MCF 10A (cell line): ENCODE measurements at regions of chr17 and their contacts with region 1.

Region 1: GRCh38 chr17:79393358-79394202 is 217.3 kb downstream of the RBFOX3 start:
- DNase-seq: peak; percentile 63
- H3K4me3 Mint-ChIP-seq: no peak overlapping the region
- H3K27ac Mint-ChIP-seq: no peak overlapping the region
- H3K4me1 Mint-ChIP-seq: no peaks in the 10 kb centered on the region
- H3K27me3 Mint-ChIP-seq: peaks cover 91% of the 10 kb centered on the region
- CTCF ChIP-seq: peak; percentile 91

Region 2: DNA sequence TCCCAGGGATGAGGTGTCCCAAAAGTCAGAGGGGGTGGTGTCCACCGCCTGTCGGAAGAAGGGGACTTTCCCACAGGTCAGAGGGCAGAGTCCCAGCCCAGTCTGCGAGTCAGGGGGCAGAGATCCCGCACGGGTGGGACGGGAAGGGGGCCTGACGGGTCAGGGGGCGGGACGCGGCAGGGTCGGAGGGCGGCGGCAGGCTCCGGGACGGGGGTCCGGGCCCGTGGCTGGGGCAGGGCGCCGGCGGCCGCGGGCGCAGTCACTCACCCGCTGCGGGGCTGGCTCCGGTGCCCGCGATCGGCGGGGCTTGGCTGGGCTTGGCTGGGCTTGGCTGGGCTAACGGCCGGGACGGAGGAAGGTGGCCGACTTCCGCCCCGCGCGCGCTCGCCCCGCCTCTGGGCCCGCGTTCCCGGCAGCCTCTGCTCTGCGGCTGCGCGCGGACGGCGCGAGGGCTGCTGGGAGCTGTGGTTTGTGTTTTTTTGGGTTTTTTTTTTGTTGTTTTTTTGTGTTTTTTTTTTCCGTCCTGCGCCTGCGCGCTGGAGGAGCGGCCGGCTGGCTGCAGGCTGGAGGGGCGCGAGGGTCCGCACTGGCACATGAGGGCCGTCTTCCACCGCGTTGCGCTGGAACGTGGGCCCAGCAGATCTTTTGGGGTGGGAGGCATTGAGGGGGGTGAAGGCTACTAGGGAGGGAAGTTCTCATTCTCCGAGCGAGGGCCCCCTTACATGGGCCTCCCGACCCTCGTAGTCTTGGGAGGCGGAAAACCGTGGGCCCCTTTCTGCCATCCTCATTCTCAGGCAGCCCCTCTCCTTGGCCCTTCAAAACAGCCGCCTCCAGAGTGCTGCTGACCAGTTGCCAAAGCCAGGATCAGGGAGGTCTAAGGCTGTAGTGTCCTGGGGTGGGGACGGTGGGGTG is 383.9 kb before region 1 on chr17 and contains the start of gene CANT1:
- CTCF ChIA-PET with region 1: no interaction called
- POLR2A ChIA-PET with region 1: no interaction called
- intact Hi-C with region 1: loop called (anchors 10 kb)
- DNase-seq: peak; percentile 76
- H3K4me3 Mint-ChIP-seq: peak within 1 kb of the TSS; percentile 90
- H3K27ac Mint-ChIP-seq: peak within 1 kb of the TSS; percentile 98
- H3K4me1 Mint-ChIP-seq: peaks cover 26% of the 10 kb centered on the region
- H3K27me3 Mint-ChIP-seq: no peaks in the 10 kb centered on the region
- CTCF ChIP-seq: no peak
- total RNA-seq, gene CANT1: 62.5 and 65.1 TPM in 2 replicates

Region 3: DNA sequence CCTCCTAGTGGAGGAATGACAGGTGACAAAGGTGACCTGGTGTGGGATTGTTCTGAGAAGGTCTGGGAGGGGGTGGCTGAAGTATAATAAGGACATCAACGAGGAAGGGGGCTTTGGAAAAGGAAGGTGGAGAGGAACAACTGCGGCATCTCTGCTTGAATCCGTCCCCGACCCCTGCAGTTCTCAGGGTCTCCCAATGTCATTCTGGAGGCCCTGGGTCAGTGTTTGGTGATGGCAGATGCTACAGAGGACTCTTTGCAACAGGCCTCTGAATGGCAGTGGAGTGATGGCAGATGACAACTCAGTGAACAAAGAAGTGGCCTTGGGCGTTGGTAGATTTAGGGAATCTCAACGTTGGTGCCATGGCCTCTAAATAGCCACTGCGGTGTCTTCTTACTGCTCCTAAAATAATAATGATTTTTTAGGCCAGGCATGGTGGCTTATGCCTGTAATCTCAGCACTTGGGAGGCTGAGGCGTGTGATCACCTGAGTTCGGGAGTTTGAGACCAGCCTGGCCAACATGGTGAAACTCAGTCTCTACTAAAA is 317.6 kb before region 1 on chr17:
- CTCF ChIA-PET with region 1: interaction called, 273 read pairs
- POLR2A ChIA-PET with region 1: no interaction called
- intact Hi-C with region 1: no loop called
- DNase-seq: no peak
- H3K4me3 Mint-ChIP-seq: peak overlapping the region; percentile 92
- H3K27ac Mint-ChIP-seq: no peak overlapping the region
- H3K4me1 Mint-ChIP-seq: peaks cover 11% of the 10 kb centered on the region
- H3K27me3 Mint-ChIP-seq: no peaks in the 10 kb centered on the region
- CTCF ChIP-seq: no peak

Region 4: GRCh38 chr17:79188048-79188447 is 205.5 kb before region 1 on chr17:
- CTCF ChIA-PET with region 1: interaction called, 212 read pairs
- POLR2A ChIA-PET with region 1: interaction called, 8 read pairs
- intact Hi-C with region 1: loop called (anchors 1 kb)
- DNase-seq: peak; percentile 20
- H3K4me3 Mint-ChIP-seq: no peak overlapping the region
- H3K27ac Mint-ChIP-seq: no peak overlapping the region
- H3K4me1 Mint-ChIP-seq: no peaks in the 10 kb centered on the region
- H3K27me3 Mint-ChIP-seq: peaks cover 91% of the 10 kb centered on the region
- CTCF ChIP-seq: peak; percentile 82

Region 5: DNA sequence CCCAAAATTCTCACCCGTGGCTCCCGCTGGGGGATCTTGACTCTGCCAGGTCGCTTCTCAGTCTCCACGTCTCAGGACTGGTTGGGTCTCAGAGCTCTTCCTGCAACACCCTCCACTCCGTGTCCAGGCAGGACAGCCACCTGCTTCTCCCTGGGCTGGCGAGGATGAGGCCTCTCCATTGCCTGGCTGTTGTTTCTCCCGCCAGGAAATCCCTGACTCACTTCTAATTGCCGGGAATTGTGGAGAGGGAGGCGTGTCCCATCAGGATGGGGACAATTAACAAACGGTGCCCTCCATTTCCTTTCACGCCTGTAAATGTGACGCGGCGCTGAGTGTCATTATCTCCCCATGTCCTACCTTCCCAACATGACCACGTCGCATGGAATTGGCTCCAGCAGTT is 12.7 kb after region 1 on chr17:
- CTCF ChIA-PET with region 1: interaction called, 42 read pairs
- POLR2A ChIA-PET with region 1: interaction called, 3 read pairs
- intact Hi-C with region 1: no loop called
- DNase-seq: no peak
- H3K4me3 Mint-ChIP-seq: no peak overlapping the region
- H3K27ac Mint-ChIP-seq: no peak overlapping the region
- H3K4me1 Mint-ChIP-seq: peaks cover 2% of the 10 kb centered on the region
- H3K27me3 Mint-ChIP-seq: peaks cover 78% of the 10 kb centered on the region
- CTCF ChIP-seq: no peak

Region 6: GRCh38 chr17:79877041-79877705 is 483.6 kb after region 1 on chr17:
- CTCF ChIA-PET with region 1: no interaction called
- POLR2A ChIA-PET with region 1: no interaction called
- intact Hi-C with region 1: no loop called
- DNase-seq: no peak
- H3K4me3 Mint-ChIP-seq: no peak overlapping the region
- H3K27ac Mint-ChIP-seq: no peak overlapping the region
- H3K4me1 Mint-ChIP-seq: no peaks in the 10 kb centered on the region
- H3K27me3 Mint-ChIP-seq: no peaks in the 10 kb centered on the region
- CTCF ChIP-seq: no peak